Right ventricle myocardium inferior (tissue), 1 donor: ENCODE measurements at regions of chr16 and their contacts with region 1.

Region 1: GRCh38 chr16:2251483-2252240 is at the start of gene ECI1:
- DNase-seq: peak; percentile 98
- ATAC-seq: peak; percentile 99
- total RNA-seq, gene ECI1: 205 TPM

Region 2: GRCh38 chr16:2155091-2156021 is 96.3 kb before region 1 on chr16 and contains the start of gene TRAF7:
- intact Hi-C with region 1: loop called (anchors 5 kb)
- DNase-seq: peak; percentile 99
- ATAC-seq: peak; percentile 95
- total RNA-seq, gene TRAF7: 27.3 TPM

Region 3: GRCh38 chr16:2205104-2205966 is 46.3 kb before region 1 on chr16 and contains the start of gene MLST8:
- intact Hi-C with region 1: loop called (anchors 5 kb)
- DNase-seq: peak; percentile 93
- ATAC-seq: peak; percentile 89
- total RNA-seq, gene MLST8: 25.3 TPM

Region 4: GRCh38 chr16:2223375-2224182 is 28.1 kb before region 1 on chr16 and contains the start of gene E4F1:
- intact Hi-C with region 1: loop called (anchors 2 kb)
- DNase-seq: peak; percentile 100
- ATAC-seq: peak; percentile 100
- total RNA-seq, gene E4F1: 14.1 TPM

Region 5: GRCh38 chr16:2267913-2268666 is 16.4 kb after region 1 on chr16 and contains the start of gene RNPS1:
- intact Hi-C with region 1: loop called (anchors 1 kb)
- DNase-seq: peak; percentile 99
- ATAC-seq: peak; percentile 98
- total RNA-seq, gene RNPS1: 105 TPM